Left cardiac atrium (tissue), 4 donors: ENCODE measurements at regions of chr20 and their contacts with region 1.

Region 1: DNA sequence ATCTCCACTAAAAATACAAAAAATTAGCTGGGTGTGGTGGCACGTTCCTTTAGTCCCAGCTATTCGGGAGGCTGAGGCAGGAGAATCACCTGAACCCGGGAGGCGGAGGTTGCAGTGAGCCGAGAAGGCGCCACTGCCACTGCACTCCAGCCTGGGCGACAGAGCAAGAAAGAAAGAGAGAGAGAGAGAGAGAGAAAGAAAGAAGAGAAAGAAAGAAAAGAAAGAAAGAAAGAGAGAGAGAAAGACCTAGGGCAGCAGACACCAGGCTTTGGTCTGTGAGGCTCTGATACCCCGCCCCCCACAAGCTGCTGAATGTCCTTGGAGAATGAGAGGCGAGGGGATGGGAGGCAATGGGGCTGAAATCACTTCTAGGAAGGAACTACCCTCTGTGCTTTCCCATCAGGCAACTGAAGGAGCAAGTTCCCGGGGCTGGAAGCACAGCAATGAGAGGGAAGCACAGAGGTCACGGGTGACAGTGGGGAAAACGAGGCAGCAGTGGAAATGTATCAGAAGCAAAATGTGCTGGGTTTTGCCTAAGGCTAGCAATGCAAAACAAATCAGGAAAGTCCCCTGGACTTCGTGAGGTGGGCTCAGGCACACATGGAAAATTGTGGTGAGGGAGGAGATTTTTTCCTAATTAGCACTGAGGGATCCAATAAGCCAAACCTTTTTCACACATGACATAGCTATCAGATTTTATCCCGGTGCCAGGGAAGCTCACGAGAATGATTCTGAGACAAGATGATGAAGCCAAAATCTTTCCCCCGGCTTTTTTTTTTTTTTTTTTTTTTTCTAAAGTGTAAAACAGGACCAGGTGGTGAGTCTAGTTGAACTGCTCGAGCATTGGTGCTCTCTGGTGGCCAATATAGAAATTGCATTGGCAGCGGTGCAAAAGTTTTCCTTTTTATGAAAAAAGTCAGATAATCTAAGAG is 16.9 kb upstream of the ARFGEF2 start:
- DNase-seq: peak; percentile 38
- ATAC-seq: peak; percentile 14 to 42

Region 2: GRCh38 chr20:48635433-48636310 is 269.0 kb before region 1 on chr20:
- intact Hi-C with region 1: loop called in 1 of 2 experiments (anchors 5 kb)
- DNase-seq: peak; percentile 64
- ATAC-seq: peak; percentile 54 to 56

Region 3: GRCh38 chr20:48657475-48658470 is 246.9 kb before region 1 on chr20:
- intact Hi-C with region 1: loop called (anchors 1 to 2 kb)
- DNase-seq: peak; percentile 66
- ATAC-seq: peak; percentile 82 to 89